ENCODE measurements at regions of chr2 and their contacts with region 1.

Region 1: DNA sequence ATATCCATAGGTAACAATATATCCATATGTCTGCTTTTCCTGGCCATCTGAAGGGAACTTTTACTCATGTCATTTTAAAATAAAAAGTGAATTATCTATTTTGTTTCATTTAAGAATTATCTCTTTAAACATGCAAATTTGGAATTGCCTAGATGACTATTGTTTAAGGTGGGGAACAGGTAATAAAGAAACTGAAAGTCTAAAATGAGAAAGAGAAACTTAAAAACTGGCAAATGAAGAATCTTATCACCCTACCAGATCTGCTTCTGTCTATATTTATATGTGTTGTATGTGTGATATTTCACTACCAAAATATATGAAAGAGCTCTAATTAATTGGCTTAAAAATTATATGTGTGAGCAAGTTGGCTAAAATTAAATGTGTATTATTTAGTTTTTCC is 243.2 kb upstream of the KCNH7 start:
- DNase-seq: no peak
- ATAC-seq: no peak
- H3K4me3 ChIP-seq: no peak overlapping the region
- H3K4me3 Mint-ChIP-seq: no peak overlapping the region
- H3K27ac ChIP-seq: no peak overlapping the region
- H3K27ac Mint-ChIP-seq: no peak overlapping the region
- H3K4me1 ChIP-seq: no peaks in the 10 kb centered on the region
- H3K4me1 Mint-ChIP-seq: no peaks in the 10 kb centered on the region
- H3K27me3 ChIP-seq: no peaks in the 10 kb centered on the region
- H3K27me3 Mint-ChIP-seq: no peaks in the 10 kb centered on the region
- CTCF ChIP-seq: no peak

Region 2: GRCh38 chr2:162967147-162967546 is 114.6 kb before region 1 on chr2:
- CTCF ChIA-PET with region 1: no interaction called
- POLR2A ChIA-PET with region 1: no interaction called
- intact Hi-C with region 1: no loop called
- DNase-seq: no peak
- ATAC-seq: no peak
- H3K4me3 ChIP-seq: no peak overlapping the region
- H3K4me3 Mint-ChIP-seq: no peak overlapping the region
- H3K27ac ChIP-seq: no peak overlapping the region
- H3K27ac Mint-ChIP-seq: no peak overlapping the region
- H3K4me1 ChIP-seq: no peaks in the 10 kb centered on the region
- H3K4me1 Mint-ChIP-seq: no peaks in the 10 kb centered on the region
- H3K27me3 ChIP-seq: no peaks in the 10 kb centered on the region
- H3K27me3 Mint-ChIP-seq: no peaks in the 10 kb centered on the region
- CTCF ChIP-seq: no peak

Region 3: GRCh38 chr2:163028807-163029206 is 52.9 kb before region 1 on chr2:
- CTCF ChIA-PET with region 1: no interaction called
- POLR2A ChIA-PET with region 1: no interaction called
- intact Hi-C with region 1: loop called in 1 of 2 experiments (anchors 2 kb)
- DNase-seq: no peak
- ATAC-seq: no peak
- H3K4me3 ChIP-seq: no peak overlapping the region
- H3K4me3 Mint-ChIP-seq: no peak overlapping the region
- H3K27ac ChIP-seq: no peak overlapping the region
- H3K27ac Mint-ChIP-seq: no peak overlapping the region
- H3K4me1 ChIP-seq: no peaks in the 10 kb centered on the region
- H3K4me1 Mint-ChIP-seq: no peaks in the 10 kb centered on the region
- H3K27me3 ChIP-seq: no peaks in the 10 kb centered on the region
- H3K27me3 Mint-ChIP-seq: no peaks in the 10 kb centered on the region
- CTCF ChIP-seq: no peak

Measured in CD4-positive, alpha-beta T cell (primary cell).